Activated CD4-positive, alpha-beta T cell treated with anti-CD3 and anti-CD28 coated beads for 36 hours (primary cell): ENCODE measurements at regions of chr6 and their contacts with region 1.

Region 1: DNA sequence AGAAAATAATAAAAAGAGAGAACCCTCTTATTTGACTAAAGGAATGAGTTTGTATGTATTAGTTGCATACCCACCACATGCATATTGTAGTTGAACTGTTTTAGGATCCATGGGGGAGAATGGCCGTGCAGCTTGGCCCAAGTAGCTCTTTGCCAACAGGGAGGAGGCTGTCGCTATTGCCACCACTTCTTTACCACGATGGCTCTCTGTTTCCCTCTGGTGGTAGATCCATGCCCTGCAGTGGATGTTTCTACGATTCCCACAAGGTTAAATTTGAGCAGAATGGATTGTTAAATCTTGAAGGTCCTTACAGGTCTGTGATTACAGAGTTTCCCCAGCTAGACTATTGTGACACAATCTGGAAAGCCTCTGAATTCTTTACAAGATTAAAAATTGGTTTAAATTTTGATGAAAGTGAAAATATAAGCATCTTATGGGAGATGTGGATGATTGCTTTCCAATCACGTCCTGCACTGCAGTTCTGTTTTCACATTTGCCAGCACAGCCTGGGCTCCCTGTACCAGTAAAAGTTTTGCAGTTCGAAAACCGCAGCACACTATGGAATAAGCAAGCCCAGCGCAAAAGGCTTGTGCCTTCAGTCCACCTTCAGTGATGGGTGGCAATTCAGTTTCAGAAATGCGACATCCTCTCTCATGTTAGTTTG is 34.4 kb upstream of the FNDC1 start:
- DNase-seq: peak; percentile 85
- ATAC-seq: peak; percentile 94
- H3K4me3 Mint-ChIP-seq: no peak overlapping the region
- H3K27ac Mint-ChIP-seq: no peak overlapping the region
- H3K4me1 Mint-ChIP-seq: no peaks in the 10 kb centered on the region
- H3K27me3 Mint-ChIP-seq: peaks cover 5% of the 10 kb centered on the region

Region 2: DNA sequence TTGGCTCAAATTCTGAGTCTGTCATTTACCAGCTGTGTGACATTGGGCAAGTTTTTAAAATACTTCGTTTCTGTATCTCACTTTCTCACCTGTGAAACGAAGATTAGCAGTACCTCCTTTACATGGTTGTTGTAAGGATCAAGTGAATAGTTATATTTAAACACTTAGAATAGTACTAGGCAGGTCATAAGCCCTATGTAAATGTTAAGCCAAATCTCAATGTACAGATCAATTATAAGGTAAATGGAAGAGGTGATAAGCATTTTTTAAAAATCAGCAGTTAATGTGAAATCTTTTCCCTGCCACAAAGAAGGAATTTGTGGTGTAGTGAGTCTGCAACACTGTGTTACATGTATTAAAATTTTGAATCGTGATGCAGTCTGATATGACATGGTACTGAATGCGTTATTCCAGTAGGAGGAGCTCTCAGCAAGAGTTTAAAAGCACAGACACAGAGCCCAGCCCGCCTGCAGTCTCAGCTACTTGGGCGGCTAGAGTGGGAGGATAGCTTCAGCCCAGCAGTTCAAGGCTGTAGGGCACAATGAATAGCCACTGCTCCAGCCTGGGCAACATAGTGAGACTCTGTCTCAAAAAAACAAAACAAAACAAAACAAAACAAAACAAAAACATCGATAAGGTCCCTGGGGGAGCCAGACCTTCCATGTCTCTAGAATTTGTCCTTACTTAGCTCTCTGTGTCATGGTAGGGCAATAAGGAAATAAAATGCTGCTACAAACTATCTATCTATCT is 920.7 kb before region 1 on chr6:
- CTCF ChIA-PET with region 1: no interaction called
- POLR2A ChIA-PET with region 1: no interaction called
- intact Hi-C with region 1: loop called in 1 of 2 experiments (anchors 10 kb)
- DNase-seq: peak; percentile 75
- ATAC-seq: peak; percentile 97
- H3K4me3 Mint-ChIP-seq: no peak overlapping the region
- H3K27ac Mint-ChIP-seq: no peak overlapping the region
- H3K4me1 Mint-ChIP-seq: peaks cover 10% of the 10 kb centered on the region
- H3K27me3 Mint-ChIP-seq: no peaks in the 10 kb centered on the region

Region 3: DNA sequence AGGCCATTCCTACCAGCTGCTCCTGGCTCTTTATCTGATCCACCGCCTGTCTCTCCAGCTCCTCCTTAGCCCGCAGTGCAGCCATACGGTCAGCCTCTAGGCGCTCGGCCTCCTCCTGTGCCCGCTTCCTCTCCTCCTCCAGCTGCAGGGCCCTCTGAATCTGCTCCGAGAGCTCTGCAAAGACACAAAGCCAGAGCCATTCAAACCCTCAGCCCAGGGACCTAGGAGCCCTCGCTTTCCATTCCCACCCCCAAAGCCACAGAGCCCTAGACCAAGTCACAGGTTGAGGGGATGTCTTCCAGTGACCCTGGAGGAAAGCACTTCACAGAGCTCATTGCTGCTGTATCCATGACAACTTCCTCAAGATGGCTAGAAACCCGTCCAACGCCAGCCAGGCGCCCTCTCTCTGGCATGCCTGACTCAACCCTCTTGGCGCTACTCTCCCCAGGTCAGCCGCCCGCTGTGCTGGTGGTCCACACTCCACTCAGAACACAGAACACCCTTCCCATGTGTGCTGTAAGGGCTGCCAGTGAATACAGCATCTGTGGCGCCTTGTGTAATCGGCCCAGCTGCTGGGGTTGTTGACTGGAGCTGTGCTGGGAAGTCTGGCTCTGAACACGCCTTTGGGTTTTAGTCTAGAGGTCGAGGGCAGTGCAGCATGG is 364.9 kb before region 1 on chr6:
- CTCF ChIA-PET with region 1: no interaction called
- POLR2A ChIA-PET with region 1: no interaction called
- intact Hi-C with region 1: loop called in 1 of 2 experiments (anchors 10 kb)
- DNase-seq: no peak
- ATAC-seq: no peak
- H3K4me3 Mint-ChIP-seq: no peak overlapping the region
- H3K27ac Mint-ChIP-seq: peak overlapping the region; percentile 70
- H3K4me1 Mint-ChIP-seq: peaks cover 44% of the 10 kb centered on the region
- H3K27me3 Mint-ChIP-seq: no peaks in the 10 kb centered on the region

Region 4: GRCh38 chr6:158978757-158979156 is 156.1 kb before region 1 on chr6:
- CTCF ChIA-PET with region 1: interaction called, 23 read pairs
- POLR2A ChIA-PET with region 1: no interaction called
- intact Hi-C with region 1: no loop called
- DNase-seq: no peak
- ATAC-seq: no peak
- H3K4me3 Mint-ChIP-seq: no peak overlapping the region
- H3K27ac Mint-ChIP-seq: no peak overlapping the region
- H3K4me1 Mint-ChIP-seq: no peaks in the 10 kb centered on the region
- H3K27me3 Mint-ChIP-seq: no peaks in the 10 kb centered on the region

Region 5: GRCh38 chr6:158999666-159000403 is 135.0 kb before region 1 on chr6 and contains the start of gene RSPH3:
- CTCF ChIA-PET with region 1: interaction called, 23 read pairs
- POLR2A ChIA-PET with region 1: interaction called, 3 read pairs
- intact Hi-C with region 1: no loop called
- DNase-seq: peak; percentile 97
- ATAC-seq: peak; percentile 86
- H3K4me3 Mint-ChIP-seq: peak within 1 kb of the TSS; percentile 82
- H3K27ac Mint-ChIP-seq: peak within 1 kb of the TSS; percentile 66
- H3K4me1 Mint-ChIP-seq: peaks cover 46% of the 10 kb centered on the region
- H3K27me3 Mint-ChIP-seq: no peaks in the 10 kb centered on the region
- total RNA-seq, gene RSPH3: 6.5 to 9.3 TPM

Region 6: DNA sequence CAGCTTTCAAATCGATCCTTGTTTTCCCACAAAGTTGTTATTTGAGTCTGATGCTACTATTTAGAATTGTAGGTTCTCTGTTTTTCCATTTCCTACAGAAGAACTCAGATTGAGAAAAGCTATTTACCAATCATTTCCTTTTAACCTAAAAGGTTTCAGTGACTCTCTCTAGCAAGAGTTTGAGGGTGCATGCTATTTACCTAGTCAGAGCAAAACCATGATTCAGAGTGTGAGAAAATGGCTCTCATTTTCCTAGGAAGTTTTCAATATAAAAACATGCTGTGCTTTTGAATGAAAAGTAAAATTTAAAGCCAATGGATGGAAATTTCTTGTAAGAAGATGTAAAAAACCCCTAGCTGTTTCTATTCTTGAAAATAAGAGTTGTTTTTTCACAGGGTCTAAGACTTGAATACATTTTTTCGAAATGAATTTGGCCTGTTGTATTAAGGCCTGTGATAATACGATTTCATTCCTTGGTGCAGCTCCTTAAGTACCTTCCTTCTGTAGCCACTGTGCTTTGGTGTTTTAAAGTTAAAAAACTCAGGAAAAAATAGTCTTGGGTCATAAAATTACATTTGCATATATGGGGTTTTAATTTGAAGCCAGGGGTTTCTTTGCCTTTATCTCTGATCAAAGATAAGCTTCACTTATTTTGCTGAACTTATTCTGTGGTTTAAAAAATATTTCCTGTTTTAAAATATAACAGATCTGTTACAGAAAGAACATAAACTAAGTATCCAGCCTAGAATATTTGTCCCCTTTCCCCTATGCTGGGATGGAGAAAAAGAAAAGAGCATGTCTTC is 116.9 kb before region 1 on chr6:
- CTCF ChIA-PET with region 1: interaction called, 25 read pairs
- POLR2A ChIA-PET with region 1: no interaction called
- intact Hi-C with region 1: no loop called
- DNase-seq: no peak
- ATAC-seq: peak; percentile 92
- H3K4me3 Mint-ChIP-seq: no peak overlapping the region
- H3K27ac Mint-ChIP-seq: peak overlapping the region; percentile 81
- H3K4me1 Mint-ChIP-seq: peaks cover 64% of the 10 kb centered on the region
- H3K27me3 Mint-ChIP-seq: no peaks in the 10 kb centered on the region